ENCODE measurements at regions of chr3 and their contacts with region 1.

Region 1: DNA sequence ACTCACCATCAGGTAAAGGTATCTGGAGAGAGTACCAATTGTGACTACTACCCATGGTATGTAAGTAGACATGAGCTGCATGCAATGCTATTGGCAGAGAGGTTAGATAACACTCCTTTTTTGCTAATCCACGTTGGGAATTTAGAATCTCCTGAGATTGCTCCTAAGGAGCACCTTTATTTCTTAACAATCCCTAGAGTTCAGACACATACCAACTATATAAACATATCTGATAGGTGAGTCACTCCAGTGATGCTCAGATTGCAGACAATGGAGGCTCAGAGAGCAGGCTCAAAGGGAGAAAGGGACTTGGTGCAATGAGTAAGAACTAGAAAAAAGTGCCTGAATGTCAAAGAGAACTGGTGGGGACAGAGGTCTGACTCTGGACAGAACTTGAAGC is 47.0 kb upstream of the LRRFIP2 start:
- DNase-seq: no peak
- ATAC-seq: no peak
- H3K4me3 ChIP-seq: no peak overlapping the region
- H3K27ac ChIP-seq: no peak overlapping the region
- H3K4me1 ChIP-seq: no peaks in the 10 kb centered on the region
- H3K27me3 ChIP-seq: no peaks in the 10 kb centered on the region
- CTCF ChIP-seq: no peak
- POLR2A ChIP-seq: no peak

Region 2: GRCh38 chr3:37024092-37024491 is 197.3 kb before region 1 on chr3:
- in situ Hi-C with region 1: loop called in 1 of 4 experiments (anchors 25 kb)
- intact Hi-C with region 1: no loop called
- DNase-seq: no peak
- ATAC-seq: no peak
- H3K4me3 ChIP-seq: no peak overlapping the region
- H3K27ac ChIP-seq: no peak overlapping the region
- H3K4me1 ChIP-seq: peaks cover 9 to 13% of the 10 kb centered on the region in 2 donors
- H3K27me3 ChIP-seq: no peaks in the 10 kb centered on the region
- CTCF ChIP-seq: peak in 3 of 5 experiments; percentile 27 to 39 (median 29)
- POLR2A ChIP-seq: no peak

Region 3: GRCh38 chr3:37272743-37273142 is 51.3 kb after region 1 on chr3:
- in situ Hi-C with region 1: no loop called
- intact Hi-C with region 1: no loop called
- DNase-seq: no peak
- ATAC-seq: peak in 1 of 2 donors; percentile 81
- H3K4me3 ChIP-seq: no peak overlapping the region
- H3K27ac ChIP-seq: peak overlapping the region; percentile 39 to 62 (median 44)
- H3K4me1 ChIP-seq: peaks cover 23 to 31% of the 10 kb centered on the region in 2 donors
- H3K27me3 ChIP-seq: no peaks in the 10 kb centered on the region
- CTCF ChIP-seq: no peak
- POLR2A ChIP-seq: no peak

Region 4: DNA sequence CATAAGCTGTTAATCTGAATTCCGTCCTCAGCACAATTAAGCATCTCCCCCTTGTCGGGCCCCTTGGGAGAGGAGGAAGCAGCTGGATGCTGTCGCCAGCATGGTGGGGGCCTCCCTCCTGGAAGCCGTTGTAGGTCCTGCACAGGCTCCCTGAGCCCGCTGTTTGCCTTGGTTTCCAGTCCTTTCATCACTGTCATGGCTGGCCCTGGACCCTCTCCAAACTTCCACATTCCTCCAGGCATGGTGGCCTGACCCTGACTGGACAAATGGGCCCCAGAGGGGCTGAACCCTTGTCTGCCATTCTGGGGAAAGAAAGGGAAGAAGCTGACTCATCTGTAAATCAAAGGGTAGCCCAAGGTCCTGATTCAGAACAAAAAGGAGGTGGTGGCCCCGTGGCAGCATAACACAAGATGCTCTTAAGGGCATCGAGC is 253.5 kb after region 1 on chr3:
- in situ Hi-C with region 1: no loop called
- intact Hi-C with region 1: no loop called
- DNase-seq: no peak
- ATAC-seq: no peak
- H3K4me3 ChIP-seq: no peak overlapping the region
- H3K27ac ChIP-seq: no peak overlapping the region
- H3K4me1 ChIP-seq: no peaks in the 10 kb centered on the region
- H3K27me3 ChIP-seq: no peaks in the 10 kb centered on the region
- CTCF ChIP-seq: no peak
- POLR2A ChIP-seq: no peak

Measured in gastrocnemius medialis (tissue), 4 donors.